H1 (cell line): ENCODE measurements at regions of chr1 and their contacts with region 1.

Region 1: GRCh38 chr1:20640183-20640597 is 6.9 kb downstream of the PINK1 start:
- DNase-seq: peak in 1 of 2 experiments; percentile 72
- H3K4me3 ChIP-seq: no peak overlapping the region
- H3K27ac ChIP-seq: no peak overlapping the region
- H3K4me1 ChIP-seq: peaks cover 0 to 5% (median 3%) of the 10 kb centered on the region in 4 experiments; a peak in 3 of 7 replicates
- H3K27me3 ChIP-seq: no peaks in the 10 kb centered on the region
- CTCF ChIP-seq: peak; percentile 14 to 78 (median 77)
- EP300 ChIP-seq: no peak
- POLR2A ChIP-seq: no peak
- RAD21 ChIP-seq: peak; percentile 86 to 87

Region 2: DNA sequence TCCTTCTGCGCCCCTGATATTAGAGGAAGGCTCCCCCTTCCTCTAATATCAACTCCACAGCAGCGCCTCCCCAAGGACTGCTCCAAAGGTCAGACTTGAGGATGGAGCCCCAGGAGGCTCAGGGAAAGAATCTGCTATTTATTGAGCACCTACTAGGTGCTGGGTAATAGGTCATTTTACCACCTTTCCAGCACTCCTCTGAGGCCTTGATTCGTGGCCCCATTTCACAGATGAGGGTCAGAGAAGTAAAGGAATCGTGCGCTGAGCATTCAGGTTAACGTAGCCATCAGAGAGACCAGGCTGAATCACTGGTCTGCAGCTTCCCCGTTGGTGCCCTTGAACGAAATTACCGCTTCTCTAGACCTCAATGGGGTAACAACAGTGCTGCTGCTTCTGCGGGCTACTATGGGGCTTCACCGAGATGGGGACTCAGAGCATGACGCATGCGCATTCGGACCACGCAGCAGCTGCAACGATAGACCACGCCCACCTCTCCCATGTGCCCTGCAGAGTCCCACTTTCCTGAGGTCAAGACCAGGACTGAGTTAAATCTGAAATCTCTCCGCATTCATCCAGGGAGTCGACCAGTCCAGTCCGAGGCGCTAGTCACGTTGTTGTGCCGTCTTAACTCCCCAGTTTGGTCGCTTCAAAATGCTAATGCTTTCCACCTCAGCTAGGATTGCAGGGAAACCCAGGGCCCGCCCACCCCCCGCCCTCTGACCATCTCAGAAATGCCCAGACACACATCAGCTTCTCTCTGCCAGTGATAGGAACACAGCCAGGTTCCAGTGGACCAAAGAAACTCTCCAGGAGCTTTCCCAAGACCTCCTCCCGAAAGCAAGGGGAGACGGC is 167.1 kb before region 1 on chr1:
- CTCF ChIA-PET with region 1: no interaction called
- POLR2A ChIA-PET with region 1: no interaction called
- DNase-seq: peak in 1 of 2 experiments; percentile 89
- H3K4me3 ChIP-seq: peak overlapping the region; percentile 10 to 50 (median 23); a peak in 4 of 8 replicates
- H3K27ac ChIP-seq: no peak overlapping the region
- H3K4me1 ChIP-seq: peaks cover 8 to 19% (median 12%) of the 10 kb centered on the region in 4 experiments; a peak in 6 of 7 replicates
- H3K27me3 ChIP-seq: peaks cover 0 to 8% (median 4%) of the 10 kb centered on the region in 4 experiments; a peak in 5 of 7 replicates
- CTCF ChIP-seq: no peak
- EP300 ChIP-seq: no peak
- POLR2A ChIP-seq: no peak
- RAD21 ChIP-seq: no peak

Region 3: GRCh38 chr1:20497506-20497905 is 142.7 kb before region 1 on chr1:
- CTCF ChIA-PET with region 1: no interaction called
- POLR2A ChIA-PET with region 1: no interaction called
- DNase-seq: no peak
- H3K4me3 ChIP-seq: no peak overlapping the region
- H3K27ac ChIP-seq: no peak overlapping the region
- H3K4me1 ChIP-seq: peaks cover 0 to 11% (median 0%) of the 10 kb centered on the region in 4 experiments; a peak in 3 of 7 replicates
- H3K27me3 ChIP-seq: no peaks in the 10 kb centered on the region; a peak in 2 of 7 replicates
- CTCF ChIP-seq: no peak
- EP300 ChIP-seq: no peak
- POLR2A ChIP-seq: no peak
- RAD21 ChIP-seq: no peak

Region 4: GRCh38 chr1:20521960-20522861 is 118.0 kb before region 1 on chr1:
- CTCF ChIA-PET with region 1: interaction called, 35 read pairs
- POLR2A ChIA-PET with region 1: interaction called, 4 read pairs
- DNase-seq: peak; percentile 46 to 94
- H3K4me3 ChIP-seq: 0 out of 8 replicates have a peak overlapping the region, but pooled peaks of 1 of the 4 experiments have one; percentile 14
- H3K27ac ChIP-seq: no peak overlapping the region
- H3K4me1 ChIP-seq: peaks cover 0 to 1% (median 0%) of the 10 kb centered on the region in 4 experiments; a peak in 1 of 7 replicates
- H3K27me3 ChIP-seq: no peaks in the 10 kb centered on the region; a peak in 1 of 7 replicates
- CTCF ChIP-seq: peak; percentile 67 to 94 (median 92)
- EP300 ChIP-seq: no peak
- POLR2A ChIP-seq: no peak
- RAD21 ChIP-seq: peak; percentile 96 to 98

Region 5: DNA sequence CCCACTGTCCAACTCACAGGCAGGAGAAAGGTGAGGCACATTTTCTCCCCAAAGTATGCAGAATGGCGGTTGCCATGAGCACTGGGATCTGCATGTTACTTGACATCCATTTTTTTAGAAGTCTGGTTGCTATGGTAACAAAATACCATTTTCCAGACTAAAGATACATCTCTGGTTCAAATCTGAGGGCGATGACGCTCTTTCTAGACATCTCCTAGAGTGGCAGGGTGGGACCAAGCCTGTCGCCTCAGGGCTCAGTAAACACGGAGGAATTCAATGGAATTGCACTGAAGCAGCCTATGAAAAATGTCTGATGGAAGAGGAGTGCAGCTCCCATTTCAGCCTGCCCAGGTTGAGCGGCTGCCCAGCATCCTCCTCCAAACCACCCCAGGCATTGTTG is 109.3 kb before region 1 on chr1:
- CTCF ChIA-PET with region 1: interaction called, 10 read pairs
- POLR2A ChIA-PET with region 1: no interaction called
- DNase-seq: no peak
- H3K4me3 ChIP-seq: no peak overlapping the region
- H3K27ac ChIP-seq: no peak overlapping the region
- H3K4me1 ChIP-seq: no peaks in the 10 kb centered on the region
- H3K27me3 ChIP-seq: peaks cover 0 to 6% (median under 1%) of the 10 kb centered on the region in 4 experiments; a peak in 4 of 7 replicates
- CTCF ChIP-seq: no peak
- EP300 ChIP-seq: no peak
- POLR2A ChIP-seq: no peak
- RAD21 ChIP-seq: no peak

Region 6: DNA sequence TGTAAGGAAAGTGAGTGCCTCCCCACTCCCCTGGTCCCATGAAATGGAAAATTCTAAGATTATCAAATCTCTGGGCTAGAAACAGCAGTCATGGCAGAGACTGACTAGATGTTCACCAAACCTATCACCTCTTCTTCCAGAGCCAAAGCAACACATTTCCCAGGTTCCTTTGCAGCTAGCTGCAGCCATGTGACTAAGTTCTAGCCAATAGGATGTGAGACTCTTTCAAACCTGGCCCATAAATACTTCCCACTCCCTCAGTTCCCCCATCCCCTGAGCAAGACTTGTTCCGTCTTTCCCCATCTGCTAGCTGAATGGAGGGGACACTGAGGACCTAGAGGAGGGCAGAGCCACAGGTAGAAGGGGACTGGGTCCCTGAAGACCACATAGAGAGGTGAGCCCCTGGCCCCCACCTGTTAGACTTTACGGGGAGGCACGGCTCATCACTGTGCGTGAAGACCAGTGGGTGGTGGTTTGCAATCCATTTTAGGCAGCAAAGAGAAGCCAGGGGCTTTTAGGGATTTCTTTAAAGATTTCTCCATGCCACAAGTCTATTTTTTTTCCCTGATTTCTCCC is 70.6 kb before region 1 on chr1:
- CTCF ChIA-PET with region 1: interaction called, 85 read pairs
- POLR2A ChIA-PET with region 1: interaction called, 3 read pairs
- DNase-seq: no peak
- H3K4me3 ChIP-seq: no peak overlapping the region
- H3K27ac ChIP-seq: no peak overlapping the region
- H3K4me1 ChIP-seq: no peaks in the 10 kb centered on the region
- H3K27me3 ChIP-seq: peaks cover 0 to 9% (median 0%) of the 10 kb centered on the region in 4 experiments; a peak in 1 of 7 replicates
- CTCF ChIP-seq: no peak
- EP300 ChIP-seq: no peak
- POLR2A ChIP-seq: no peak
- RAD21 ChIP-seq: no peak

Region 7: DNA sequence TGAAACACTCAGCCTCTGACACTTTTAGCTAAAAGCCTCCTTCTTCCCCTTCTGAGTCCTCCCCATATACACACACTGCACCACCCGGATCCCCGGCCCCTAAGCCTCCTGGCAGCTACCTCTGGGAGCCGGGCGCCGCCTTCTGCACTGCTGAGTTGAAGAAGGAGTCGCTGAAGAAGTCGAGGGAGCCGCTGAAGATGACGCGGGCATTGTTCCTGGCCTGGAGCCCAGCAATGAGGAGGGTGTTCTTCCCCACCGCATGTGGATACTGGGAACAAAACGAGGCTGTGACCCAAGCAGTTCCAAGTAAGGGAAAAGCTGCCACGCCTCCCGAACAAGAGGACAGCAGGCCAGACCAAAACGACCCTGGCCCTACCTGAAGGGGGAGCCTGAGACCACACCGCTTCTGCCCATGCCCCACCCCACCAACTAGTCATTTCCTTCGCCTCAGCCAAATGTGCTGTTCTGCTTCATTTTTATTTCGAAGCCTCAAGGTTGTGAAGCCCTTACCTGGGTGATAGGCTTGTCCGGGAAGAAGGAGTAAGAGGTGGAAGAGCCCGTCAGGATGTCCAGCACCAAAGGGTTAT is 14.0 kb after region 1 on chr1:
- CTCF ChIA-PET with region 1: interaction called, 10 read pairs
- POLR2A ChIA-PET with region 1: interaction called, 11 read pairs
- DNase-seq: no peak
- H3K4me3 ChIP-seq: no peak overlapping the region
- H3K27ac ChIP-seq: no peak overlapping the region
- H3K4me1 ChIP-seq: no peaks in the 10 kb centered on the region
- H3K27me3 ChIP-seq: no peaks in the 10 kb centered on the region
- CTCF ChIP-seq: peak; percentile 32 to 63 (median 56); a peak in 3 of 4 replicates
- EP300 ChIP-seq: no peak
- POLR2A ChIP-seq: no peak
- RAD21 ChIP-seq: peak; percentile 56 to 61

Region 8: DNA sequence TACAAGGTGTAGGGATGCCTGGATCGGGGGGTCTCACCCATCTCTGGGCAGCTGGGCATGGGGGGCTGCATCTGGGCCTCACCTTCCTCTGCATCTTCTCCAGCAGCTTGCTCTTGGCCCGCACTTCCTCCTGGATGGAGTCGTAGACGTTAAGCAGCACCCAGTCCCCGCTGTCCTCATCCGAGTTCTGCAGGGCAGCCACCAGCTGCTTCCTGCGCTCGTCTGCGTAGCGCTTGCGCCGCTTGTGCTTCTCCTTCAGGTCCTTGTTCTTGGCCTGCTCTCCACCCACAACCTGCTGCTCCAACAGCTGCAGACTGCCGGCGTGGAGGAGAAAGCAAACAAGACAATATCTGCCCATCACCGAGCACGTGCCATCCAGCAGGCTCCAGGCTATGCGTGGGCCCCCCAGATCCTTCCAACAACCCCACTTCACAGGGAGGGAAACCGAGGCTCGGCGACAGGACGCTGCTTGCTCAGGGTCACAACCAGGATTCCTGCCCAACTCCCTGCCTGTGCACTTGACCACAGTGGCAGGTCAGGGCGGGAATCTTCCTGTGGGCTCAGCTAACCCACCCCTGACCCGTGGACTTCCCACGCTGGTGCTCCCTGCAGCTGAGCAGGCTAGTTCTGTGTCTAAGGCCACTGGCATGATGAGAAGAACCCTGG is 42.5 kb after region 1 on chr1:
- CTCF ChIA-PET with region 1: no interaction called
- POLR2A ChIA-PET with region 1: no interaction called
- DNase-seq: no peak
- H3K4me3 ChIP-seq: no peak overlapping the region
- H3K27ac ChIP-seq: no peak overlapping the region
- H3K4me1 ChIP-seq: no peaks in the 10 kb centered on the region; a peak in 1 of 7 replicates
- H3K27me3 ChIP-seq: no peaks in the 10 kb centered on the region; a peak in 1 of 7 replicates
- CTCF ChIP-seq: no peak
- EP300 ChIP-seq: no peak
- POLR2A ChIP-seq: no peak
- RAD21 ChIP-seq: no peak

Region 9: DNA sequence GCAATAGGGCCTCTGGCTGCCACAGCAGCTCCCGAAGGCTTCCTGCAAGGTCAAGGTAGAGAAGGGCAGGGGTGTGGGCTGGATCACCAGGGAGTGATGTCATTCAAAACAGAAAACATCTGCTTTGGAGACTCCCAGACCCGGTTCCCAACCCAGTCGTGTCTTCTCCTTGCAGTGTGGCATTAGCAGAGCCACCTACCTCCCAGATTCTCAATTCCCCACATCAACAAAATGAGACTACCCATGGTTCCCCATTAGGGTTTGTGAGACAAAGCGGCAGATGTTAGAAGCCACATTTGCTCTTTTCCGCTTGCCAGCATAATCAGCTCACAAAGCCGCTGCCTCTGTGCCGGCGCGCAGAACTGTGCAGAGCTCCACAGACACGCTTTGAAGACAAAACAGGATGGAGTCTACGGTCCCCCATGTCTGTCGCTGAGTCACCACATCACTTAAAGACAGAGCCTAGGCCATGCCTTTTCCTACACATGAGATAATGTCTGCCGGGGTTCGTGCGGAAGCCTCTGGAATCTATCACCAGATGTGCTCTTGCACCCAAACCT is 65.1 kb after region 1 on chr1:
- CTCF ChIA-PET with region 1: no interaction called
- POLR2A ChIA-PET with region 1: no interaction called
- DNase-seq: no peak
- H3K4me3 ChIP-seq: no peak overlapping the region
- H3K27ac ChIP-seq: no peak overlapping the region
- H3K4me1 ChIP-seq: no peaks in the 10 kb centered on the region
- H3K27me3 ChIP-seq: no peaks in the 10 kb centered on the region
- CTCF ChIP-seq: no peak
- EP300 ChIP-seq: no peak
- POLR2A ChIP-seq: no peak
- RAD21 ChIP-seq: no peak